ENCODE measurements at regions of chr22 and their contacts with region 1.

Region 1: GRCh38 chr22:45268958-45269844 is 15.5 kb upstream of the UPK3A start:
- DNase-seq: peak; percentile 86 to 97 (median 90)
- ATAC-seq: peak; percentile 98
- H3K4me3 ChIP-seq: peak overlapping the region; percentile 42 to 48
- H3K27ac ChIP-seq: no peak overlapping the region
- H3K4me1 ChIP-seq: peaks cover 3 to 16% of the 10 kb centered on the region in 2 donors
- H3K27me3 ChIP-seq: peaks cover 0 to 27% of the 10 kb centered on the region in 2 donors
- CTCF ChIP-seq: peak; percentile 93 to 95

Region 2: GRCh38 chr22:45208993-45209801 is 60.0 kb before region 1 on chr22:
- intact Hi-C with region 1: no loop called
- DNase-seq: peak in 2 of 4 donors; percentile 32 to 76
- ATAC-seq: no peak
- H3K4me3 ChIP-seq: no peak overlapping the region
- H3K27ac ChIP-seq: no peak overlapping the region
- H3K4me1 ChIP-seq: peaks cover 0 to 30% of the 10 kb centered on the region in 2 donors
- H3K27me3 ChIP-seq: no peaks in the 10 kb centered on the region
- CTCF ChIP-seq: peak; percentile 30 to 57

Region 3: GRCh38 chr22:45429981-45430775 is 161.0 kb after region 1 on chr22:
- intact Hi-C with region 1: loop called in 1 of 2 experiments (anchors 5 kb)
- DNase-seq: peak in 1 of 4 donors; percentile 61
- ATAC-seq: no peak
- H3K4me3 ChIP-seq: no peak overlapping the region
- H3K27ac ChIP-seq: no peak overlapping the region
- H3K4me1 ChIP-seq: peaks cover 0 to 3% of the 10 kb centered on the region in 2 donors
- H3K27me3 ChIP-seq: no peaks in the 10 kb centered on the region
- CTCF ChIP-seq: no peak

Measured in left lung (tissue), 14 donors.